ENCODE measurements at regions of chr4 and their contacts with region 1.

Region 1: DNA sequence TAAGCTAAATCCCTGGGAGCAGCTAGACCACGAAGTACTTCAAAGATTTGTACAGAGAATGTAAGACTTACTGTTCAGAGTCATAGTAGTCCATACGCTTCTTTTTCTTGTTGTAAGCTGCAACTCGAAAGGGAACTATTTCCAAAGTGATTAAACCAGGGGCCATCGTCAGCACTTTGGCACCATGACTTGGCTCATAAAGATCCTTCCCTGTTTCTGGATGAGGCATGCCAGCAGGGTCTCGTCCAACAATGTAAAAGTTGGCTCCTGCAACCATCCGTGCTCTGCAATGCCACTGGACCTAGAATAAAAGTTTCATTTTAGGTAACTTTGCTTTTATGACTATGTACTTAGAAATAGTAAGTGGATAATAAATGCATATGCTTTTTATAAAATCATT is 88.5 kb downstream of the PAPSS1 start:
- DNase-seq: no peak
- ATAC-seq: no peak
- H3K4me3 ChIP-seq: no peak overlapping the region
- H3K27ac ChIP-seq: no peak overlapping the region
- H3K4me1 ChIP-seq: no peaks in the 10 kb centered on the region
- H3K27me3 ChIP-seq: no peaks in the 10 kb centered on the region
- CTCF ChIP-seq: no peak
- POLR2A ChIP-seq: no peak
- RAD21 ChIP-seq: no peak

Region 2: DNA sequence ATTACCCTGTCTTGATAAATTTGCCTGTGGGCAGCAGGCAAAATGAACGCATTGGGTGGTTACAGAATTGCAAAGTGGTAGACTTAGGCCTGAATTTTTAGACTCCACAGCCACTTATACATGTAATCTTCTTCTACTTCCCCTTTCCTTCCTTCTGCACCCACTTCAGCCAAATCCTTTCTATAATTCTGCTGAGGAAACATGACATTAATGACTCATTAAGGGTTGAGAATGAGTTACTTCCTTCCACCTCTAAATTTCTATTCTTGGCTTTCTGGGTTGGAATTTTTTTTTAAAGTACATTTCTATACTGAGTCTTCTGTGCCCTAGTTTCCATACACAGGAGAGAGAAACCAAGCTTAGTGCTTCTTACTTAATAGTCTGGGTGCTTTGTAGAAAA is 78.4 kb after region 1 on chr4:
- CTCF ChIA-PET with region 1: no interaction called
- POLR2A ChIA-PET with region 1: interaction called, 12 read pairs
- dilution Hi-C with region 1: no loop called
- in situ Hi-C with region 1: no loop called
- intact Hi-C with region 1: no loop called
- DNase-seq: peak; percentile 22
- ATAC-seq: no peak
- H3K4me3 ChIP-seq: no peak overlapping the region
- H3K27ac ChIP-seq: no peak overlapping the region
- H3K4me1 ChIP-seq: peaks cover 3% of the 10 kb centered on the region
- H3K27me3 ChIP-seq: no peaks in the 10 kb centered on the region
- CTCF ChIP-seq: no peak
- POLR2A ChIP-seq: no peak
- RAD21 ChIP-seq: no peak

Measured in IMR-90 (cell line).